ENCODE measurements at regions of chr2 and their contacts with region 1.

Region 1: GRCh38 chr2:96554293-96555145 is 18.0 kb downstream of the ARID5A start:
- DNase-seq: peak; percentile 72 to 81 (median 79)
- H3K4me3 ChIP-seq: peak overlapping the region in 4 of 7 experiments; percentile 14 to 70 (median 36)
- H3K27ac ChIP-seq: no peak overlapping the region
- H3K4me1 ChIP-seq: peaks cover 0 to 11% (median 7%) of the 10 kb centered on the region in 4 experiments
- H3K27me3 ChIP-seq: no peaks in the 10 kb centered on the region

Region 2: GRCh38 chr2:96527286-96528005 is 27.1 kb before region 1 on chr2:
- CTCF ChIA-PET with region 1: interaction called, 429 read pairs
- POLR2A ChIA-PET with region 1: interaction called, 21 read pairs
- DNase-seq: peak; percentile 82 to 86 (median 82)
- H3K4me3 ChIP-seq: peak overlapping the region; percentile 30 to 79 (median 66)
- H3K27ac ChIP-seq: peak overlapping the region; percentile 91 to 94
- H3K4me1 ChIP-seq: peaks cover 10 to 68% (median 64%) of the 10 kb centered on the region in 4 experiments
- H3K27me3 ChIP-seq: no peaks in the 10 kb centered on the region

Region 3: DNA sequence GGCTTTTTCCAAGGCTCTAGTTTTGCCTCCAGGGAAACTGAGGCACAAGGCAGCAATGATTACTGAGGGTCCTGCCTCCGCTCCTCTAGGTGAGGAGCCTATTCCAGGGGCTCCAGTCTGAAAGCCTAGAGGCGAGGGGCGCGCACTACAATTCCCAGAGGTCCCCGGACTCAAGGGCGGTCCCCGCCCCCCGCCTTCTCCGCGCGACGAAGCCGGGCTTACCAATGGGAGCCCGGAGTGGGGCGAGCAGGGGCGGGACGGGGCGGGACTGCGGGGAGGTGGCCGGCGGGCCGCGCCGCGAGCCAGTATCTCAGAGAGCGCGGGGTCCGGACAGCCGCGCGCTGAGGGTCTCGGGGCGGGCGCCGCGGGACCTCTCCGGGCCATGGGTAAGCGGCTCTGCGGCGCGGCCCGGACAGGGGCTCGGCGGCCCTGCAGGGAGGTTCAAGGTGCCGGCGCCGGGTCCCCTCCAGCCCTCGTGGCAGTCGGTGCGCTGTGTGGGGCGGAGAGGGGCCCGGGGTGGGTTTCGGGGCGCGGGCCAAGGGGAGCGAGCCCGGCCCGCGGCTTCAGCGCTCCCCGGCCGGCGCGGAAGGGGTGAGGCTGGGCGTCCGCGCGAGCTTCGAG is 18.0 kb before region 1 on chr2 and contains the start of gene ARID5A:
- CTCF ChIA-PET with region 1: interaction called, 429 read pairs
- POLR2A ChIA-PET with region 1: interaction called, 44 read pairs
- DNase-seq: peak; percentile 90 to 94 (median 94)
- H3K4me3 ChIP-seq: peak within 1 kb of the TSS; percentile 62 to 85 (median 67)
- H3K27ac ChIP-seq: peak within 1 kb of the TSS; percentile 74 to 89
- H3K4me1 ChIP-seq: peaks cover 11 to 78% (median 71%) of the 10 kb centered on the region in 4 experiments
- H3K27me3 ChIP-seq: no peaks in the 10 kb centered on the region

Measured in common myeloid progenitor, CD34-positive (primary cell).